ENCODE measurements at regions of chr1 and their contacts with region 1.

Region 1: GRCh38 chr1:27154991-27155781 is at the start of gene SLC9A1:
- DNase-seq: peak; percentile 75
- ATAC-seq: peak; percentile 89
- H3K4me3 ChIP-seq: peak within 1 kb of the TSS; percentile 82
- H3K27ac ChIP-seq: peak within 1 kb of the TSS; percentile 79
- H3K4me1 ChIP-seq: peaks cover 21% of the 10 kb centered on the region
- H3K27me3 ChIP-seq: no peaks in the 10 kb centered on the region
- CTCF ChIP-seq: peak; percentile 82 to 96 (median 92)
- EP300 ChIP-seq: 0 out of 4 replicates have a peak, but pooled peaks of 1 of the 2 experiments have one; percentile 41
- POLR2A ChIP-seq: peak; percentile 99
- RAD21 ChIP-seq: peak; percentile 35; the same call in 1 of the 2 replicates
- polyA plus RNA-seq, gene SLC9A1: 0.87 to 1.1 TPM

Region 2: DNA sequence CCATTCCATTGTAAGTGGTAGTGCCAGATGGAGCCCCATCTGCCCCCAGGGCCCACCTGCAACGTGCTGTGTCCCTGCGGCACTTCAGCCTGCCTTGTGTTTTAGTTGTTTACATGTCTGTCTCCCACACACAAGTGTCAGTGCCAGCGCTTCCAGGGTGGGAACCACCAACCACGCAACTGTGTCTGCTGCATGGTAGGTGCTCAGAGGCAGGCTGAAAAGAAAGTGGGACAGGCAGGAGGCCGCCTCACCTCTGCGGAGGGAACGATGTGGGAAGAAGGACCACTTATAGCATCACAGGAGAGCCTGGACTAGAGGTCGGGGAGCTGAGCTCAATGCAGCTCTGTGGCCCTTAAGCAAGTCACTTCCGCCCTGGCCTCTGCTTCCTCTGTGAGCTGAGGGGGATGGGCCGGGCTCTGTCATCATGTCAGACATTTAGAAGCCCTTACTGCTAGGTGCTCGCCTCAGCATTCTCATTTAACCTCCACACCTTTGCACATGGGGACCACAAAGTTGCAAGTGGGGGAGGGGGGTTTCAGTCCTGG is 18.1 kb before region 1 on chr1:
- CTCF ChIA-PET with region 1: interaction called, 18 read pairs
- POLR2A ChIA-PET with region 1: interaction called, 48 read pairs
- RAD21 ChIA-PET with region 1: interaction called, 35 read pairs
- SMC1A ChIA-PET with region 1: interaction called, 30 read pairs
- in situ Hi-C with region 1: no loop called
- intact Hi-C with region 1: loop called (anchors 2 kb)
- DNase-seq: no peak
- ATAC-seq: peak; percentile 21
- H3K4me3 ChIP-seq: peak overlapping the region; percentile 17; the same call in 1 of the 2 replicates
- H3K27ac ChIP-seq: peak overlapping the region; percentile 83
- H3K4me1 ChIP-seq: peaks cover 52% of the 10 kb centered on the region
- H3K27me3 ChIP-seq: no peaks in the 10 kb centered on the region
- CTCF ChIP-seq: no peak
- EP300 ChIP-seq: no peak
- POLR2A ChIP-seq: peak; percentile 84
- RAD21 ChIP-seq: no peak